Calu3 (cell line): ENCODE measurements at regions of chr13 and their contacts with region 1.

Region 1: GRCh38 chr13:47726351-47726750 is 274.7 kb downstream of the SUCLA2 start:
- DNase-seq: no peak
- H3K4me3 Mint-ChIP-seq: no peak overlapping the region
- H3K27ac Mint-ChIP-seq: peak overlapping the region; percentile 59
- H3K4me1 Mint-ChIP-seq: peaks cover 15% of the 10 kb centered on the region
- H3K27me3 Mint-ChIP-seq: no peaks in the 10 kb centered on the region
- CTCF ChIP-seq: no peak

Region 2: GRCh38 chr13:47708386-47708785 is 18.0 kb before region 1 on chr13:
- CTCF ChIA-PET with region 1: no interaction called
- intact Hi-C with region 1: loop called (anchors 1 kb)
- DNase-seq: peak; percentile 47
- H3K4me3 Mint-ChIP-seq: peak overlapping the region; percentile 55
- H3K27ac Mint-ChIP-seq: peak overlapping the region; percentile 99
- H3K4me1 Mint-ChIP-seq: peaks cover 27% of the 10 kb centered on the region
- H3K27me3 Mint-ChIP-seq: no peaks in the 10 kb centered on the region
- CTCF ChIP-seq: no peak

Region 3: DNA sequence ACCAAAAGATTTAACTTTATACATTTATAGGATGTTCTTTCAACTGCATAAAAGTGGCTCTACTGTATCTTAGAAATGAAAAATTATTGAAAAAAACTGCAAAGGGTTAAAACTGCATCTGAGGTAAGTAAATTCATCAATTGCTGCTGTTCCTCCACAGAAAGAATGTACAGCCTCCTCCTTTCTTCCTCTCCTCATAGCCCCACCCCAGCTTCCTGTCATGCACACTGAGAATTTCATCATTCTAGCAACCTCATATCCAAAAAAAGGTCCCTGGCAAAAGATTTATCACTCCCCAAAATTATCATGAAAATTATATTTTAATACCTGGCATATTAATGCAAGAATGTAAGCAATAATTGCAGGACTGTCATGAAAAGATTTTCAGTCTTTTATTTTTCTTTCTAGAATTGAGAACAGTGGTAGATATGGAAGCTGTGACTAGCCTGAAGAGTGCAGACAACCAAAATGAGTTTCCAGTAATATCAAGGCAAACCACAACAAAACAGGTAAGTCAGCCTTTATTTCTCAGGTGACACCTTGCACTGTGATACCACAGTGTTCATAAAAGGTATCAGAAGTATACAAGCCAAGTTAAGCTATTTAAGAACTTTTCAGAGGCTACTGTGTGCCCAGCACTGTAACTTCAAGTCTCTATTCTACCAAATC is 163.9 kb after region 1 on chr13:
- CTCF ChIA-PET with region 1: no interaction called
- intact Hi-C with region 1: no loop called
- DNase-seq: no peak
- H3K4me3 Mint-ChIP-seq: no peak overlapping the region
- H3K27ac Mint-ChIP-seq: no peak overlapping the region
- H3K4me1 Mint-ChIP-seq: no peaks in the 10 kb centered on the region
- H3K27me3 Mint-ChIP-seq: no peaks in the 10 kb centered on the region
- CTCF ChIP-seq: no peak

Region 4: GRCh38 chr13:48037346-48038173 is 311.2 kb after region 1 on chr13 and contains the start of gene NUDT15:
- CTCF ChIA-PET with region 1: no interaction called
- intact Hi-C with region 1: no loop called
- DNase-seq: peak; percentile 92
- H3K4me3 Mint-ChIP-seq: peak within 1 kb of the TSS; percentile 93
- H3K27ac Mint-ChIP-seq: peak within 1 kb of the TSS; percentile 95
- H3K4me1 Mint-ChIP-seq: peaks cover 22% of the 10 kb centered on the region
- H3K27me3 Mint-ChIP-seq: no peaks in the 10 kb centered on the region
- CTCF ChIP-seq: peak; percentile 88
- total RNA-seq, gene NUDT15: 19.2 and 19.4 TPM in 2 replicates